ENCODE measurements at regions of chr1 and their contacts with region 1.

Region 1: GRCh38 chr1:23979878-23980724 is at the start of gene SRSF10:
- H3K4me3 ChIP-seq: peak within 1 kb of the TSS; percentile 100
- H3K27ac ChIP-seq: peak within 1 kb of the TSS; percentile 96
- H3K4me1 ChIP-seq: peaks cover 27% of the 10 kb centered on the region
- CTCF ChIP-seq: peak; percentile 98

Region 2: GRCh38 chr1:23704834-23705495 is 275.1 kb before region 1 on chr1:
- CTCF ChIA-PET with region 1: no interaction called
- POLR2A ChIA-PET with region 1: no interaction called
- H3K4me3 ChIP-seq: no peak overlapping the region
- H3K27ac ChIP-seq: no peak overlapping the region
- H3K4me1 ChIP-seq: no peaks in the 10 kb centered on the region
- CTCF ChIP-seq: no peak

Region 3: GRCh38 chr1:23959041-23959460 is 21.1 kb before region 1 on chr1:
- CTCF ChIA-PET with region 1: no interaction called
- POLR2A ChIA-PET with region 1: interaction called, 24 read pairs
- H3K4me3 ChIP-seq: peak overlapping the region; percentile 73
- H3K27ac ChIP-seq: peak overlapping the region; percentile 98
- H3K4me1 ChIP-seq: no peaks in the 10 kb centered on the region
- CTCF ChIP-seq: peak; percentile 71

Region 4: DNA sequence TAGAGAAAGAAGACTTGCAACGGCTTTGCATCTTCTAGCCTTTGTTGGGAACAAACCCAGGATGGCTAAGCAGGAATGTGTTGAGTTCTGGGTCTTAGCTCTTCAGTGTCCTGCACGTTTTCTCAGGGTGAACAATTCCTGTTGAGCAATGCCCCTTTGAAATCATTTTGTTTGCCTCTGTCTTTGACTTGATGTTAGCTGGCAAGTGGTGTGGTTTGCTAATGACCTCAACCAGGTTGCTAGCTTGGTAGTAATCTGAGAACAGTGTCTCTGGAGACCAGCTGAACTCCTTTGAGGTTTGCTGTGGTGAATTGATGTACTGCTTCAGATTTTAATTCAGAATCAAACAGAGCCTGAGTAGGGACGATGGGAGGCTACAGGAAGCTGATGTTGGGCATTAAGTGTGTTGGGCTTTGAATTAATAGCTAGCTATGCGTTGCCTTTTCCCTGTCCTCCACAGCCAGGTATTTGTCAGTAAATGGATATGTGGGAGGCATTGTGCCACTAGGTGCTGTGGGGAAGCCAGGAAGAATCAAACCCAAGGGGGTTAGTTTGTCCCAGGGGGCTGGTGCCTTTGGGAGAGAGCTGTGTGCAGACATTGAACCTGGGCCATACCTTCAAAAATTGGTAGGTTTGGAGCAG is 23.4 kb after region 1 on chr1:
- CTCF ChIA-PET with region 1: interaction called, 3 read pairs
- POLR2A ChIA-PET with region 1: interaction called, 10 read pairs
- H3K4me3 ChIP-seq: no peak overlapping the region
- H3K27ac ChIP-seq: peak overlapping the region; percentile 18; the same call in 1 of the 2 replicates
- H3K4me1 ChIP-seq: peaks cover 16% of the 10 kb centered on the region
- CTCF ChIP-seq: no peak

Region 5: DNA sequence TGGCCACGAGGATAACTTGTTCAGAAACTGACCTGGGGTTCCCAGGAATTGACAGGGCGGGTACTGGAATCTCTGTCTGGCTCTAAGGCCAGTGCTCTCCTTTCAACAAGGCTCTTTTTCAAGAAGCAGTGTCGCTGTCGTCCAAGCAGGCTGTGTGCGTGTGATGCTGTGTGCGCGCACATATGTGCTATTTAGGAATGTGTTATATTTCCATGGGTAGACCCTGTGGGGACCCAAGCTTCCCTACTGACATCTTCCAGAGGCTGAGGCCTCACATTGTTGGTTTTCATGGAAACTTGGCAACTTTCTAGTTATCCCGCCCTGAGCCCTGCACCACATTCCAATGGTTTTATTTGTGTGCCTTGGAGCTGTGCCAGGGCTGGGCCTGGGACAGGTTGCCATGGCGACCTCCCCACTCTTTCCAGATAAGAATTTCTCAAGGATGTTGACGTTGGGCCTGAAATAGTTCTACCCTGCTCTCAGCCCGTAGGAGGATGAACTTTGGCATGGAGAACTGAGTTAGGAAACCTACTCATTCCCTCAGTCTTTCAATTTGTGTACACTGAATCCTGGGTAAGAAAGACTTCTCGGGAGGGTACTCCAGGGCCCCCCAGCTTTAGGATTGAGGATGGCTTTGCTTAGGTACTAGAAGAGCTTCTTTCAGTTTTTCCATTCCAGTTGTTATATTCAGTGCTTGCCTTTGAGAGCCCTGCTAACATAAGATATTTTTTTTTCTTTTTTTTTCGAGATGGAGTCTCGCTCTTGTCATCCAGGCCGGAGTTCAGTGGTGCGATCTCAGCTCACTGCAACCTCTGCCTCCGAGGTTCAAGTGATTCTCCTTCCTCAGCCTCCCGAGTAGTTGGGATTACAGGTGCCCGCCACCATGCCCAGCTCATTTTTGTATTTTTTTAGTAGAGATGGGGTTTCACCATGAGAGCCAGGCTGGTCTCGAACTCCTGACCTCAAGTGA is 38.8 kb after region 1 on chr1:
- CTCF ChIA-PET with region 1: interaction called, 6 read pairs
- POLR2A ChIA-PET with region 1: interaction called, 11 read pairs
- H3K4me3 ChIP-seq: no peak overlapping the region
- H3K27ac ChIP-seq: peak overlapping the region; percentile 61
- H3K4me1 ChIP-seq: peaks cover 12% of the 10 kb centered on the region
- CTCF ChIP-seq: no peak

Region 6: DNA sequence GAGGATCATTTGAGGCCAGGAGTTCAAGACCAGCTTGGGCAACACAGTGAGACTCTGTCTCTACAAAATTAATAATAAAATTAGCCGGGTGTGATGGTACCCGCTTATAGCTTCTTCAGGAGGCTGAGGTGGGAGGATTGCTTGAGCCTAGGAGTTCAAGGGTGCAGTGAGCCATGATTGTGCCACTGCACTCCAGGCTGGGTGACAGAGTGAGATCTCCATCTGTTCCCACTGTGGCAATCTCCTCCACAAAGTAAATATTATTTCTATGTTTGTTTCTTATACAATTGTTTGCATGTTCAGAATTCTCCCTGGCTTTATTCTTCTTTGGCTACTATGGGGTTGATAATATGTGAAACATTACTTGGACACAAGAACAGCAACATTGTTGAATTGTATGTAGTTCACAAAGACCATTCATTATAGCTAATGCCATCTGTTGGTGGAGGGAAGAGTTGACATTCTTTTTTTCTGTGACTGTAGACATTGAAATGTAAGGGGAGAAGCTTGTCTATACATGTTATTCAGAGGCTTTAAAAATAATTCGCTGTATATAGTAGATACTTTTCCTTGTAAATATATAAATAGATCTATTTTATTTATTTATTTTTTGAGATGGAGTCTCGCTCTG is 47.9 kb after region 1 on chr1:
- CTCF ChIA-PET with region 1: interaction called, 21 read pairs
- POLR2A ChIA-PET with region 1: interaction called, 15 read pairs
- H3K4me3 ChIP-seq: no peak overlapping the region
- H3K27ac ChIP-seq: no peak overlapping the region
- H3K4me1 ChIP-seq: no peaks in the 10 kb centered on the region
- CTCF ChIP-seq: 0 out of 2 replicates have a peak, but pooled peaks have one; percentile 30

Region 7: GRCh38 chr1:24085546-24085945 is 105.4 kb after region 1 on chr1:
- CTCF ChIA-PET with region 1: no interaction called
- POLR2A ChIA-PET with region 1: no interaction called
- H3K4me3 ChIP-seq: no peak overlapping the region
- H3K27ac ChIP-seq: no peak overlapping the region
- H3K4me1 ChIP-seq: no peaks in the 10 kb centered on the region
- CTCF ChIP-seq: no peak

Region 8: GRCh38 chr1:24888971-24889676 is 909.0 kb after region 1 on chr1:
- CTCF ChIA-PET with region 1: no interaction called
- POLR2A ChIA-PET with region 1: no interaction called
- H3K4me3 ChIP-seq: no peak overlapping the region
- H3K27ac ChIP-seq: no peak overlapping the region
- H3K4me1 ChIP-seq: no peaks in the 10 kb centered on the region
- CTCF ChIP-seq: no peak

Measured in HEK293 (cell line).